GM12878 (cell line): ENCODE measurements at regions of chr11 and their contacts with region 1.

Region 1: DNA sequence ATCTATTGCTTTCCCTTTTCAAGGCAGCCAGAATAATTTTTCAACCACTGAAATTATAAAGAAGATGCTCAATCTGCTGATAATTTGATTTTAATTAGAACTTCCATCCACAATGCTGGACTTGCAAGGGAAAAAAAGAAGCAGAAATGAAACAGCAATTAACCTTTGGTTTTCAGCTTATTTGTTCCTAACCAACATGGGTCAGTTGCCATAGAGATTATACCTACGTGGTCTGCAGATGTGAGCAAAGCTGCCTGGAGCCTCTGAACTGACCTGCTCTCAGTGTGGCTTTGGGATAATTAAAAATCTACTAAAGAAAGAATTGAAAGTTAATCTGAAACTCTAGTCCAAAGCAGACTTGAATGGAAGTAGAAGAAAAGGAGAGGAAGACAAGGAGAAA is 195.7 kb upstream of the API5 start:
- DNase-seq: no peak
- ATAC-seq: peak; percentile 68
- H3K4me3 ChIP-seq: no peak overlapping the region
- H3K27ac ChIP-seq: no peak overlapping the region
- H3K4me1 ChIP-seq: no peaks in the 10 kb centered on the region; the same call in 1 of the 2 replicates
- H3K27me3 ChIP-seq: no peaks in the 10 kb centered on the region
- CTCF ChIP-seq: no peak
- EP300 ChIP-seq: no peak
- POLR2A ChIP-seq: no peak
- RAD21 ChIP-seq: no peak

Region 2: DNA sequence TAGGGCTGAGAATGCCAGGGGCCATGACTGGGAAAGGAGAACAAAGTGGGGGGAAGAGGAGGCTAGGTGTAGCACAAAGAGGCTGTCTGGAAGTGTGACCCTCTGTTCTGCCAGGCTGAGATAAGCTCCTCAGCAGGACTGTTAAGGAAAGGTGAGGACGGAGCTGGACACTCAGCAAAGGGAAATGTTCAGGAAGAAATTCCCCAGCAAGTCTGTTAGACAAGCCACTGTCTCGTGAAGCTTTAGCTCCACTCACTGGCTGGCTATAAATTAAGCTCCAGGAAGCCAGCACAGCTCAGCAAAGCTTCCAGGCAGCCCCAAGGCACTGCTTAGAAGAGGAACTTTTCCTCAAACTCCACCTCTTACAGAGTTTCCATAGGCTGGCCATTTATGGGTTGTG is 14.5 kb after region 1 on chr11:
- CTCF ChIA-PET with region 1: interaction called, 7 read pairs
- POLR2A ChIA-PET with region 1: no interaction called
- RAD21 ChIA-PET with region 1: interaction called, 3 read pairs
- SMC1A ChIA-PET with region 1: interaction called, 10 read pairs
- in situ Hi-C with region 1: no loop called
- intact Hi-C with region 1: no loop called
- DNase-seq: no peak
- ATAC-seq: peak; percentile 61; the same call in 2 of the 3 replicates
- H3K4me3 ChIP-seq: no peak overlapping the region
- H3K27ac ChIP-seq: no peak overlapping the region
- H3K4me1 ChIP-seq: no peaks in the 10 kb centered on the region
- H3K27me3 ChIP-seq: no peaks in the 10 kb centered on the region
- CTCF ChIP-seq: peak in 1 of 3 experiments; percentile 47; a peak in 2 of 6 replicates
- EP300 ChIP-seq: no peak
- POLR2A ChIP-seq: no peak
- RAD21 ChIP-seq: peak; percentile 52